Activated naive CD4-positive, alpha-beta T cell treated with anti-CD3 and anti-CD28 coated beads for 36 hours (primary cell): ENCODE measurements at regions of chr9 and their contacts with region 1.

Region 1: DNA sequence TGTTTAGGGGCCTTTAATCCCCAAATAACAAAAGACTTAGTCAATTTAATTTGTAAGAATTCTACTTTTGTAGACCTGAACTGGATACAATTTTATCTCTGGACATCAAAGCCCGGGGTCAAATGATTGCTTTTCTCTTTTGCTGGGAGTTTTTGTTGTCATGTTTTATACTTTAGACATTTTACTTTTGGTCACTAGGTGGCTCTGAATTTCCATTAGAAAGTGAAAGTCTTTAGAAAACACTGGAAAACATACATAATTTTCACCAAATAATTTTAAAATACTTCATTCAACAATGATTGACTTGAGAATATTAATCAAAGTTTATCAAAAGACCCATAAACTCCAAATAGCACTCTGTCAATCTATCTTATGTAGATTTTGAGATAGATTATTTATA is 2.8 kb upstream of the PCA3 start:
- DNase-seq: no peak
- H3K4me3 Mint-ChIP-seq: no peak overlapping the region
- H3K27ac Mint-ChIP-seq: no peak overlapping the region
- H3K4me1 Mint-ChIP-seq: no peaks in the 10 kb centered on the region
- H3K27me3 Mint-ChIP-seq: no peaks in the 10 kb centered on the region

Region 2: DNA sequence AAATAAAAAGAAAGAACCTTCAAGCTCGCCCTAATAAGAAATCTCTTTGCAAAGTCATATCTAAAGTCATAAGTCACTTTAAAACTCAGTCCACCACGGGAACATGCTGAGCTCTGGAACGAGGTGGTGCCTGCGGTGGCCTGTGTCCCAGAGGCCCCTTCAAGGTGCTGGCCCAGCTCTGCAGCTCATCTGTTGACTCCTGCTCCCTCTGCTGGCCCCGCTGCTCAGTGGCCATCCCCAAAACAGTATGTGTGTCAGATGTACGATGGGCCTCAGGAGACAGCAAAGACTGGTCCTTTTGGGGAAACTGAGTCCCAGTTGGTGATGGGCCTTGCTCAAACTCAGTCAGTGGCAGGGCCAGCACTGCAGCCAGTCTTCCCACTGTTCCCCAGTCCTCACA is 235.3 kb after region 1 on chr9:
- CTCF ChIA-PET with region 1: no interaction called
- intact Hi-C with region 1: loop called (anchors 5 kb)
- DNase-seq: peak; percentile 35
- H3K4me3 Mint-ChIP-seq: no peak overlapping the region
- H3K27ac Mint-ChIP-seq: no peak overlapping the region
- H3K4me1 Mint-ChIP-seq: no peaks in the 10 kb centered on the region
- H3K27me3 Mint-ChIP-seq: peaks cover 10% of the 10 kb centered on the region